Esophagus squamous epithelium (tissue), 5 donors: ENCODE measurements at regions of chr1 and their contacts with region 1.

Region 1: DNA sequence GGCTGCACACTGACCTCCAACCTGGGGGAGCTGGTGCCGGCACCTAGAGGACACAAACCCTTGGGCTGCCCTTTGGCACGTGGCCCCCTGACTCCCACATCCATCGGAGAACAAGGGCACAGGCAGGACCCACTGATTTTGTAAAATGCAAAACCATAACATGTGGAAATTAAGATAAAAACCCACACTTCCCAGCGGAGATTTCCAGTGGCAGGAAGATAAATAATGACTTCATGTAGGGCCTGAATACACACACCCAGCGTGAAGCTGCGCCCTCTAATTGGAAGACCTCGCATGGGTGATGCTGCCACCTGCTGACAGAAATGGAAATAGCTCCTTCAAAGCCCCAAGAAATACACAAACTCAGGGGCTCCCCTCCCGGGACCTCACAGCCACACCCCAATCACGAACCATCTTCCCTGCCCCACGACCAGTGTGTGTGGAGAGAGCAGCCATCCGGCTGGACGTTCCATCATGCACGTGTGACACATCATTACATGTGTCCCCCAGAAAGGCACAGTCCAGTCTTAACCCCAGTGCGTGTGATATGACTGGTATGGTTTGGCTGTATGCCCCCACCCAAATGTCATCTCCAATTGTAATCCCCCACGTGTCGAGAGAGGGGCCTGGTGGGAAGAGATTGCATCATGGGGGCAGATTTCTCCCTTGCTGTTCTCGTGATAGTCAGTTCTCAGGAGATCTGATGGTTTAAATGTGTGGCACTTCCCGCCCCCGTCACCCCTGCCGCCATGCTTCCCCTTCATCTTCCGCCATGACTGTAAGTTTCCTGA is 5.7 kb upstream of the TPRG1L start:
- DNase-seq: no peak
- H3K4me3 ChIP-seq: no peak overlapping the region
- H3K27ac ChIP-seq: no peak overlapping the region
- H3K4me1 ChIP-seq: peaks cover 14 to 36% (median 16%) of the 10 kb centered on the region in 3 donors
- H3K27me3 ChIP-seq: peaks cover 0 to 13% (median 0%) of the 10 kb centered on the region in 4 donors
- CTCF ChIP-seq: peak; percentile 78 to 90 (median 86)
- POLR2A ChIP-seq: no peak

Region 2: GRCh38 chr1:3491291-3492246 is 127.5 kb before region 1 on chr1:
- intact Hi-C with region 1: loop called (anchors 5 kb)
- DNase-seq: no peak
- H3K4me3 ChIP-seq: no peak overlapping the region
- H3K27ac ChIP-seq: no peak overlapping the region
- H3K4me1 ChIP-seq: peaks cover 7 to 25% (median 9%) of the 10 kb centered on the region in 3 donors
- H3K27me3 ChIP-seq: no peaks in the 10 kb centered on the region
- CTCF ChIP-seq: peak; percentile 97 to 100 (median 98)
- POLR2A ChIP-seq: no peak

Region 3: DNA sequence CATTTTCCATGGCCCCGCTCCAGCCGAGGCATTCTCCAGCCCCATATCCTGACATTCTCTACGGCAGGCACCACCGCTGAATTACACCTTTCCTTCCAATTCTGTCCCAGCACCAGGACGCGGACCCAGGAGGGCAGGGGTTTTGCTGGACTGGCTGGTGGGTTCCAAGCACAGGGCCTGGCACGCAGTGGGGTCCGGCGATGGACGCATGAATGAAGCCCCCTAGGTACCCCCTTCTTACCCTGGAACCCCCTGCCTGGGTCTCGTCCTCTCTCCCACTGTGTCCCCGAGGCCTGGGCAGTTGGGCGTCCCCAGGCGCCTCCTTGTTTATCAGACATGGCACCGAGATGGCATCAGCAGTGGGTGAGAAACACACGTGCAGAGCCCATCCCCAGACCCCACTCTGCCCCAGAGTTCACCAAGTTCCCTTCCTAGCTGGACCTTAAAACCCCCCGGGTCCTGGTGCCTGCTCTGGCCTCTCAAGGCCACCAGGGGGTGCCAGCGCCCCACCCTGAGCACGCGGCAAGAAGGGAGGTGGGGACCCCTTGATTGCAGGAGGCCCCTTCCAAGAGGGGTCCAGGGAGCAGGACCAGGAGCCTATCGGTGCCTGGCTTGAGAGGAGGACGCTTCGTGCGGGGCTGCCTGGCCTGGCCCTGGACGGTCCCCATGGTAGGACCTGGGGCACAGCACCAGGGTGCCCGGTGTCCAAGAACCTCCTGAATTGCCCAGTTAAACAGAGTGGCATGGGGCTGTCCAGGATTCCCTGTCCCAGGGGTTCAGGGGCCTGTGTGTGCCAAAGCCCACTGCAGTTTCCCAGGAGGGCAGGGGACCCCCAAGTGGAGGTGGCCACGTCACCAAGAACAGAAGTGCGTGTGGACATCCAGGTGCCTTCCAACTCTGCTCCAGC is 53.9 kb before region 1 on chr1:
- intact Hi-C with region 1: loop called (anchors 5 kb)
- DNase-seq: no peak
- H3K4me3 ChIP-seq: no peak overlapping the region
- H3K27ac ChIP-seq: no peak overlapping the region
- H3K4me1 ChIP-seq: peaks cover 0 to 13% (median 0%) of the 10 kb centered on the region in 3 donors
- H3K27me3 ChIP-seq: peaks cover 0 to 38% (median 0%) of the 10 kb centered on the region in 4 donors
- CTCF ChIP-seq: peak; percentile 42 to 86 (median 68)
- POLR2A ChIP-seq: no peak

Region 4: GRCh38 chr1:3831433-3832088 is 212.5 kb after region 1 on chr1:
- intact Hi-C with region 1: no loop called
- DNase-seq: no peak
- H3K4me3 ChIP-seq: no peak overlapping the region
- H3K27ac ChIP-seq: no peak overlapping the region
- H3K4me1 ChIP-seq: no peaks in the 10 kb centered on the region
- H3K27me3 ChIP-seq: no peaks in the 10 kb centered on the region
- CTCF ChIP-seq: no peak
- POLR2A ChIP-seq: no peak

Region 5: DNA sequence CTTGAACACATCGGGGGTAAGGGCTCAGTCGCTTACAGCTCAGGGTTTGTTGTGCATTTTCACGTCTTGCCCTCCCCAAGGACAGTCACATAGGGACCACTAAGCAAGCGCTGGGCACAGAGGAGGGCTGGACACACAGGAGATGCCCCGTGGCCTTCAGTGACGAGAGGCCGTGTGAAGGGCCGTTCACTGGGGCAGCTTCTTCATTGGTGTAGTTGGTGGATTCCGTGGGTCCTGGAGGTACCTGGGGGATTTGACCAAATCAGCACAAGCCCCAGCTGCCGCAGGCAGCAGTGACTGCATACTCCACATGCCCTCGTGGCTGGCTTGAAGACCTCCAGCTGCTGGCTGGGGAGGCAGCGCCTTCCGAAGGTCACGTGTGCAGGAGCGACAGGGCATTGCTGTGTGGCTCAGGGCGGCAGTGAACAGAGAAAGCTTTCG is 381.8 kb after region 1 on chr1:
- intact Hi-C with region 1: no loop called
- DNase-seq: no peak
- H3K4me3 ChIP-seq: no peak overlapping the region
- H3K27ac ChIP-seq: no peak overlapping the region
- H3K4me1 ChIP-seq: no peaks in the 10 kb centered on the region
- H3K27me3 ChIP-seq: peaks cover 0 to 42% (median 0%) of the 10 kb centered on the region in 4 donors
- CTCF ChIP-seq: no peak
- POLR2A ChIP-seq: no peak